Heart right ventricle (tissue), 16 donors: ENCODE measurements at regions of chr16 and their contacts with region 1.

Region 1: DNA sequence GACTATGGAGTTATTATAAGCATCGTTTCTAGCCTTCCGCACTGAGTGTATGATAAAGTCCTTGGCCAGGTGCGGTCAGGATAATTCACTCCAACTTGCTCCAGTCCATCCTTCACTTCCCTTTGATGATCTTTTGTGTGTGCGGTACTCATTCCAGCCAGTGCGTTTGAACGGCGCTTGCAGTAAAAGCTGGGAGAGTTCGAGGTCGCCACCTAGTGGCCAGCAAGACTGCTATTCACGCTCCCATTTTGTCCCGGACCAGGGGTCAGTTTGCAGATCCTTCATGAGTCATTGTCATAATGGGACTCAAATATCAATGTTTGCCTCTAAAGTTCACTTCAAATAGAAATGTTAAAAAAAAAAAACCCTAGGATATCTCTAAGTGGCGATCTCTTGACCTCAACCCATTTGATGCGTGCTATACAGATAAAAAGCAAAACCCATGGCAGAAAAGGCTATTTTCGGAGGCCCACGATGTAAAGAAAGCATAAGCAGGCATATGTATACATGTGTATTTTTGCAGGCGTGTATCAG is 417.1 kb downstream of the TMEM114 start:
- DNase-seq: peak; percentile 52 to 56
- ATAC-seq: peak in 6 of 8 donors; percentile 38 to 80 (median 56)
- H3K4me3 ChIP-seq: no peak overlapping the region
- H3K27ac ChIP-seq: no peak overlapping the region
- H3K4me1 ChIP-seq: no peaks in the 10 kb centered on the region
- H3K27me3 ChIP-seq: peaks cover 0 to 6% (median 0%) of the 10 kb centered on the region in 7 donors
- CTCF ChIP-seq: peak; percentile 57 to 84 (median 79)

Region 2: GRCh38 chr16:7025616-7026190 is 1147.5 kb before region 1 on chr16:
- intact Hi-C with region 1: loop called in 3 of 10 experiments (anchors 5 kb)
- DNase-seq: peak; percentile 60 to 63
- ATAC-seq: peak in 7 of 8 donors; percentile 52 to 77 (median 68)
- H3K4me3 ChIP-seq: no peak overlapping the region
- H3K27ac ChIP-seq: no peak overlapping the region
- H3K4me1 ChIP-seq: no peaks in the 10 kb centered on the region
- H3K27me3 ChIP-seq: peaks cover 0 to 4% (median 0%) of the 10 kb centered on the region in 7 donors
- CTCF ChIP-seq: peak; percentile 16 to 65 (median 62)

Region 3: DNA sequence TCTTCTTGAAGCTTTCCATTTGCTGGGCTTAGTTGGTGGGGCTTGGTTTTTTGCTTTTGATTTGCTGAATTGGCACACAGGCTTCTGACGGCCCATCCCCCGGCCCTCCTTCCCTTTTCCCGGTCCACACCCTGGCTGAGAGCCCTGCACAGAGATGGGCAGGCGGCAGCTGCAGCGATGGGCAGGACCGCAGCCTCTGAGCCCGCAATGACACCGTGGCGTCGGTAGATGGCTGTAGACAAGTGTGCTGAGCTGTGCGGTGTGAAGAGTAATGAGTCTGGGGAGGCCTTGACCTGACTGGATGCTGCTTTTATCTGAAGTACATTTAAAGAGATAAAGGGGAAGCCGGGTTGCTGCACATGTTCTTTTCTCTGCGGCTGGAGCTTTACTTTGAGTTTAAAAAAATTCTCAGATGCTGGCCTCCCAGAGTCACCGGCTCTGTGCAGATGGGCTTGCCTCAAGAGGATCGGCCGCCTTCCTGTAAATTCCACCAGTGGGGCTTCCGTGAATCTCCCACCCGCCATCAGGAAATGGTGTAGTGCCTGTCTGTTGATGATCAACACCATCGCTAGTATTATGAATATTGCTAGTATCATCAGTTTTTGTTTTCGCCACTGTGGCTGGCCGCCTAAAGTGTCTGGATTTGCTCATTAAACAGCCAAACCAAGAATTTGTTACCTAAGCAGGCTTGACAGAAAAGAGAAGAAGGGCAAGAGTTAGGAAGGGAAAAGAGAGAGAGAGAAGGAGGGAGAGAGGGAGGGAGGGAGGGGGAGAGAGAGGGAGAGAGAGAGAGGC is 1086.2 kb before region 1 on chr16:
- intact Hi-C with region 1: loop called in 1 of 10 experiments (anchors 10 kb)
- DNase-seq: peak; percentile 6 to 33
- ATAC-seq: peak in 7 of 8 donors; percentile 56 to 91 (median 75)
- H3K4me3 ChIP-seq: no peak overlapping the region
- H3K27ac ChIP-seq: no peak overlapping the region
- H3K4me1 ChIP-seq: no peaks in the 10 kb centered on the region
- H3K27me3 ChIP-seq: peaks cover 0 to 55% (median 14%) of the 10 kb centered on the region in 7 donors
- CTCF ChIP-seq: peak in 7 of 9 donors; percentile 5 to 40 (median 37)

Region 4: GRCh38 chr16:7268182-7268581 is 905.0 kb before region 1 on chr16:
- intact Hi-C with region 1: loop called in 2 of 10 experiments (anchors 5 to 10 kb)
- DNase-seq: peak in 1 of 2 donors; percentile 18
- ATAC-seq: peak in 6 of 8 donors; percentile 4 to 63 (median 32)
- H3K4me3 ChIP-seq: no peak overlapping the region
- H3K27ac ChIP-seq: no peak overlapping the region
- H3K4me1 ChIP-seq: no peaks in the 10 kb centered on the region
- H3K27me3 ChIP-seq: no peaks in the 10 kb centered on the region
- CTCF ChIP-seq: peak; percentile 48 to 71 (median 66)

Region 5: DNA sequence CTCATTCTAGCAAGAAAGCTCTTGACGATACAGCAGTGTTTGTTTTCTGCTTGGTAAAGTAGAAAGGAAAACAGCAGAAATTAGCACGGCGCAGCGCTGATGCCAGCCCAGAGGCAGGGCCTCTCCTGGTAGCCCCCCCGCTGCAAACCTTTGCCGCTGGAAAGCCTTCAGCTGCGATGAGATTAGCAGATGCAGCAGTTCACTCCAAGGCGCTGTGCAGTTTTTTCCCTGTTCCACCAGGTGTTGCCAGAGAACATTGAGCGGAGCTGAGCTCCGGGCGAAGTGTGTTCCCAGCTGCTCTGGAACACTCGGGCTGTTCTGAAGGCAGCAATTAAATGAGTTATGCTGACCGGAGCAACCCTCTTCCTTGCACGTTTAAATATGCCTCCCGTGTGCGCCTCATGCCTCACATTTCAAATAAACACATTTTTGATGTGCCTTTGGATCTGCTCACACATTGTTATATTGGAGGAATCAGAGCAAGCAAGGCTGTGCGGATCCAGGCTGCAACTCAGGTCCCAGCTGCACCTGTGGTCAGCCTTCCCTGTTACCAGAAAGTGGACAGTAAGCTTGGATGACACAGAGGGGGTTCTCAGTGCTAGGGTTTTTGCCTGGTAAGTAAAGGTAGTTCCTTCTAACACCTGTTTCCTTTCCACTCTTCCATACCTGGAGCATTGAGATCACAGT is 767.9 kb before region 1 on chr16:
- intact Hi-C with region 1: loop called in 1 of 10 experiments (anchors 10 kb)
- DNase-seq: peak; percentile 49 to 50
- ATAC-seq: peak; percentile 86 to 96 (median 94)
- H3K4me3 ChIP-seq: peak overlapping the region in 3 of 10 donors; percentile 0 to 24 (median 1)
- H3K27ac ChIP-seq: no peak overlapping the region
- H3K4me1 ChIP-seq: peaks cover 0 to 20% (median 3%) of the 10 kb centered on the region in 9 donors
- H3K27me3 ChIP-seq: no peaks in the 10 kb centered on the region
- CTCF ChIP-seq: peak; percentile 25 to 69 (median 47)

Region 6: DNA sequence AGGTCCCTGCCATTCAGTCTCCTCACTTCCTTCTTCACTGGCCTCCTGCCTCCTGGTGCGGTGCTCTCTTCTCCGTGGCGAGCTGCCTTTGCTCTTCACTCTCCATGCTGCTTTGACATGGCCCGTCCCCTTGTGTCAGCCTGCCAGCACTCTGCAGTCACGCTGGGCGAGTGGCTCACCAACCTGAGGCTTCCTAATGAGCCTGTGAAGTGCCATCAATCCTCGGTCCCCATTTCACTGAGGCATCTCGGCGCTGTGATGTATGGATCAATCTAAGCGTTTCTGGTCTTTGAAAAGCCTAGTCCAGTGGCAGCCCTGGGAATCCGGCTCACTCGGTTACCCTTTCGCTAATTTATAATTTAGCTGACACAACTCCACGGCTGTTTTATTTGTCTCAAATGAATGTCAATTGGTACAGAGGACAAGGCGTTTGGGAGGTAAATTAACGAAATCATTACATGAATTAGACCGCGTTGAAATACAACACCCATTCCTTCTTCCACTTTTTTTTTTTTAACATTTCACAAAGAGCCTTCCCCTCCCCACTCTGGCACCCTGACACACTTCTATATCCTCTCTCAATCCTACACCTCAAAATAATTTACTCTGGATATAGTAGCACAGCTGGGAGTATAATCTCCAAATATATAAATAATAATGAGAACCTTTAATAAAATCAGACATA is 193.6 kb before region 1 on chr16:
- intact Hi-C with region 1: loop called in 1 of 10 experiments (anchors 10 kb)
- DNase-seq: no peak
- ATAC-seq: no peak
- H3K4me3 ChIP-seq: no peak overlapping the region
- H3K27ac ChIP-seq: no peak overlapping the region
- H3K4me1 ChIP-seq: no peaks in the 10 kb centered on the region
- H3K27me3 ChIP-seq: no peaks in the 10 kb centered on the region
- CTCF ChIP-seq: no peak

Region 7: DNA sequence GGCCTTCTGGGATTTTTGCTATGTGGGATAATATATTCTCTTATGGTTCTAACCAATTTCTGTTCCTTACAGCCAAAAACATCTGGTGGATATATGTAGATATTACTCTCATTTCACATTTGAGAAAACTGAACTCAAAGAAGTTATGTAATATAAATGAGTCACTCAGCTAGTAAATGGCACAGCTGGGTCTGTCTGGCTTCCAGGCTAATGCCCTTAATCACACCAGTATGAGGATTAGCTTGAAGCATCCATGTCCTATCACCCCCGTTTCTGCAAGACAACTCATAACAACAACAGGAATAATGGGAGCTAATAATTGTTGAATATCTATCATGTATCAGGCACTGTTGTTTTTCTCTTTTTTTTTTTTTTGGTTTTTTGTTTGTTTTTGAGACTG is 824.9 kb after region 1 on chr16:
- intact Hi-C with region 1: no loop called
- DNase-seq: no peak
- ATAC-seq: no peak
- H3K4me3 ChIP-seq: no peak overlapping the region
- H3K27ac ChIP-seq: no peak overlapping the region
- H3K4me1 ChIP-seq: no peaks in the 10 kb centered on the region
- H3K27me3 ChIP-seq: no peaks in the 10 kb centered on the region
- CTCF ChIP-seq: no peak